ENCODE measurements at regions of chr6 and their contacts with region 1.

Region 1: DNA sequence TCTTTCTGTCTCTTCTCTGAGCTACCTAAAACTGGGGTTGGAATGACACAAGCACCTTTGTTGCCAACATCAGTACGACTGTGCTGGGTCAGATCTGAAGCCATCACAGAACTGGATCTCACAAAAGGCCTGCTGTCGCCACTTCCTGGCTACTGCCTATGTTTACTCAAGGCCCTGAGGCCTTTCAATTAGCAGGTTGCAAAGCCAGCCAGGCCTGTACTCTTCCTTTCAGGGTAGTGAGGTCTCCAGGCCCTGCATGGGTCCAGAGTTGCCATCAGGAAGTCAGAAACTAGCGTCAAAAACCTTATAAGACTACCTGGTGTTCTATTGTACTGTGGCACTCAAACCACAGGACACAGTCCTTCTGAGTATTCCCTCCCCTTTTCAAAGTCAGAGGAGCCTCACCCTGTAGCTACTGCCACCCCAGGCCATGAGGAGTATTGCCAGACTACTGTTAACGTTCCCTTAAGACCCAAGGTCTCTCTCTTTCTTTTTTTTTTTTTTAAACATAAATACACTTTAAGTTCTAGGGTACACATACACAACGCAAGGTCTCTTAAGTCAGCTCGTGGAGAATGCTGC is 937.4 kb upstream of the GJE1 start:
- DNase-seq: no peak
- ATAC-seq: no peak
- H3K4me3 ChIP-seq: no peak overlapping the region
- H3K27ac ChIP-seq: no peak overlapping the region
- H3K4me1 ChIP-seq: no peaks in the 10 kb centered on the region
- H3K27me3 ChIP-seq: no peaks in the 10 kb centered on the region
- CTCF ChIP-seq: no peak

Region 2: GRCh38 chr6:141541581-141542324 is 346.4 kb after region 1 on chr6:
- CTCF ChIA-PET with region 1: no interaction called
- POLR2A ChIA-PET with region 1: interaction called, 11 read pairs
- in situ Hi-C with region 1: no loop called
- intact Hi-C with region 1: no loop called
- DNase-seq: no peak
- ATAC-seq: no peak
- H3K4me3 ChIP-seq: no peak overlapping the region
- H3K27ac ChIP-seq: no peak overlapping the region; the same call in 1 of the 2 replicates
- H3K4me1 ChIP-seq: no peaks in the 10 kb centered on the region
- H3K27me3 ChIP-seq: no peaks in the 10 kb centered on the region
- CTCF ChIP-seq: no peak

Measured in Panc1 (cell line).